Activated naive CD8-positive, alpha-beta T cell treated with anti-CD3 and anti-CD28 coated beads, Interleukin-2, amount 10 ng/mL, durations not matched to agents 7 days and 5 days (primary cell): ENCODE measurements at regions of chr1 and their contacts with region 1.

Region 1: GRCh38 chr1:26799479-26800142 is 11.9 kb downstream of the PIGV start:
- DNase-seq: no peak
- ATAC-seq: peak; percentile 70
- H3K4me3 Mint-ChIP-seq: peak overlapping the region; percentile 67
- H3K27ac Mint-ChIP-seq: peak overlapping the region; percentile 93
- H3K4me1 Mint-ChIP-seq: peaks cover 41% of the 10 kb centered on the region
- H3K27me3 Mint-ChIP-seq: no peaks in the 10 kb centered on the region

Region 2: GRCh38 chr1:26811057-26811456 is 11.4 kb after region 1 on chr1:
- POLR2A ChIA-PET with region 1: interaction called, 11 read pairs
- DNase-seq: no peak
- ATAC-seq: no peak
- H3K4me3 Mint-ChIP-seq: no peak overlapping the region
- H3K27ac Mint-ChIP-seq: no peak overlapping the region
- H3K4me1 Mint-ChIP-seq: peaks cover 19% of the 10 kb centered on the region
- H3K27me3 Mint-ChIP-seq: no peaks in the 10 kb centered on the region

Region 3: DNA sequence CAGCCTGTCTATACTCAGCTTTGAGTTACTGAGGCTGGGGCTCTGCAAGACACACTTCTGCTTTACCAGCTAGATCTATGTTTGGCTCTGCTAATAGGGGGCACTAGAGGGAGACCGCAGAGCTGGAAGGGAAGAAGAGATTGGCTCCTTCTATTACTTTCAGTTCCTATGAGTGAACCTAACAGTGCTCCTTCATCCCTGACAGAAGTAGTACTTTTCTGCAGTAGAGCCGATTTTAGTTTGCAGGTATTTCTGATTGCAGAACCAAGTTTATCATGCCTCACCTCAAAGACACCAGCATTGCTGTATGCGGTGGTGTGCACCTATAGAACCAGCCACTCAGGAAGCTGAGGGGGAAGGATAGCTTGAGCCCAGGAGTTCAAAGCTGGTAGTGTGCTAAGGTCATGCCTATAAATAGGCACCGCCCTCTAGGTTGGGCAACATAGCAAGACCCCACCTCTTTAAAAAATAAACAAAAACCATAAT is 21.2 kb after region 1 on chr1:
- POLR2A ChIA-PET with region 1: interaction called, 11 read pairs
- DNase-seq: no peak
- ATAC-seq: peak; percentile 97
- H3K4me3 Mint-ChIP-seq: peak overlapping the region; percentile 79
- H3K27ac Mint-ChIP-seq: peak overlapping the region; percentile 72
- H3K4me1 Mint-ChIP-seq: peaks cover 19% of the 10 kb centered on the region
- H3K27me3 Mint-ChIP-seq: no peaks in the 10 kb centered on the region

Region 4: GRCh38 chr1:26833432-26834405 is 34.1 kb after region 1 on chr1:
- POLR2A ChIA-PET with region 1: interaction called, 20 read pairs
- DNase-seq: peak; percentile 83
- ATAC-seq: peak; percentile 95
- H3K4me3 Mint-ChIP-seq: peak overlapping the region; percentile 80
- H3K27ac Mint-ChIP-seq: peak overlapping the region; percentile 98
- H3K4me1 Mint-ChIP-seq: peaks cover 53% of the 10 kb centered on the region
- H3K27me3 Mint-ChIP-seq: no peaks in the 10 kb centered on the region